Activated naive CD4-positive, alpha-beta T cell treated with anti-CD3 and anti-CD28 coated beads, Interleukin-2, amount 10 ng/mL, durations not matched to agents 7 days and 5 days (primary cell): ENCODE measurements at regions of chr11 and their contacts with region 1.

Region 1: DNA sequence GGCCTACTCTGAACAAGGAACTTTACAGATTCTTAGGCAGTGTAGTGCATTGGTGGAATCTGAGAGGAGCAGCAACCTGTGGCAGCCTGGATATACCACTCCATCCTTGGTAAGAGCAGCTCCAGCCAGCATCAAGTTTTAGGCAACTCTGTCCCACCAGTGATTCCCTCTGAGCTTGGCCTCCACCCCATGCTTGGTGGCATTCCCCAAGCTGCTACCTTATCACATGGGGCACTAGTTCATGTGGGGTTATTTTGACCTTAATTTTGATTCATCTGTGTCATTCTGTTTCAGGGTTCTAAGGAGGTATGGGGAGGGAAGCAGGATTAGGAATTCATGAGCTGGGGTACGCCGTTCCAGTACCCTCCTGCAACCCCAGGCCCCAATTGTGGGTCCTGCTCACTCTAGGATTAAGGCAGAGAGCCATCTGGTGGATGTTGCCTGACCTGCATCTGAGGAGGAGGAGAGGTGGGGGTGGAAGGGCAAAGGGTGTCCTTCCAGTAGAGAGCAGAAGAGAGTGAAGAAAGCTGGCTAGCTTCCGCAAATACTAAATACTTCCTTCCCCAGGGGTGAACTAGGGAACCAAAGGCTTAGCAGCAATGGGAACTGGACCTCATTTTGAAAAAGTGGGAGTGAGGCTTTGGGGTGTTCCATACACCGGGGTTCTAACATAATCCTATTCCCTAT is 10.5 kb downstream of the LRRC51 start:
- DNase-seq: peak; percentile 82
- H3K4me3 Mint-ChIP-seq: no peak overlapping the region
- H3K27ac Mint-ChIP-seq: peak overlapping the region; percentile 38
- H3K4me1 Mint-ChIP-seq: peaks cover 7% of the 10 kb centered on the region
- H3K27me3 Mint-ChIP-seq: no peaks in the 10 kb centered on the region

Region 2: GRCh38 chr11:72015511-72016171 is 75.5 kb before region 1 on chr11:
- CTCF ChIA-PET with region 1: interaction called, 156 read pairs
- DNase-seq: no peak
- H3K4me3 Mint-ChIP-seq: no peak overlapping the region
- H3K27ac Mint-ChIP-seq: peak overlapping the region; percentile 69
- H3K4me1 Mint-ChIP-seq: no peaks in the 10 kb centered on the region
- H3K27me3 Mint-ChIP-seq: no peaks in the 10 kb centered on the region

Region 3: DNA sequence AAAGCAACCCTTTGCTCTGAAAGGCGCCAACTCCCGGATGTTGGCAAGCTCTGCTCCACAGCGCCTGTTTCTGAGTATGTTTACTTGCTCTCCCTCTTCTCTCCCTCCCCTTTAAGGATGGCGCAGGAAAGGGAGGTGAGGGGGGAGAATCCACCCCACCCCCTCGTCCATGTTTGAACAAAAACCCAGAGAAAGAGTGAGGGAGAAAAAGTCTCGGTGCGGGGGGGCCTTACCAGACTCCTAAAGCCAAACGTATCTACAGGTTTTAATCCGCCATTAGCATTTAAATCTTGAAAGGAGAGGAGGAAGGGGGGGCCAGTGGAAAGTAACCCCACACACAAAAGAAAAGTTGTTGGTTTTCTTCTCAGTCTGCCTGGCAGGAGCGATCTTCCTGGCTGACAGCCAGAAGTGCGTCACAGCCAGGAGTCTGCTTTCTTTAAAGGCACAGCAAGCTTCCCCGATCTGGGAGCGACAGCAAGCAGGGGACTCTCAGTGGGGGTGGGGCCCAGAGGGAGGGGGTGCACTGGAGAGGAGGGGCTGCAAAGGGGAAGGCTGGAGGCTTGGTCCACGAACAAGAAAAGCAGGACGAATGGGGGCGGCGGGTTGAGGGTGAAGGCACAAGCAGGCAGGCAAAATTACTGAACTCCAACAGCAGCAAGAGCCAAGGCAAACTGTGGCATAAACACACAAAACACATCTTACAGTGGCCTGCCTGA is 50.3 kb before region 1 on chr11:
- CTCF ChIA-PET with region 1: interaction called, 16 read pairs
- DNase-seq: peak; percentile 84
- H3K4me3 Mint-ChIP-seq: no peak overlapping the region
- H3K27ac Mint-ChIP-seq: no peak overlapping the region
- H3K4me1 Mint-ChIP-seq: peaks cover 22% of the 10 kb centered on the region
- H3K27me3 Mint-ChIP-seq: no peaks in the 10 kb centered on the region

Region 4: DNA sequence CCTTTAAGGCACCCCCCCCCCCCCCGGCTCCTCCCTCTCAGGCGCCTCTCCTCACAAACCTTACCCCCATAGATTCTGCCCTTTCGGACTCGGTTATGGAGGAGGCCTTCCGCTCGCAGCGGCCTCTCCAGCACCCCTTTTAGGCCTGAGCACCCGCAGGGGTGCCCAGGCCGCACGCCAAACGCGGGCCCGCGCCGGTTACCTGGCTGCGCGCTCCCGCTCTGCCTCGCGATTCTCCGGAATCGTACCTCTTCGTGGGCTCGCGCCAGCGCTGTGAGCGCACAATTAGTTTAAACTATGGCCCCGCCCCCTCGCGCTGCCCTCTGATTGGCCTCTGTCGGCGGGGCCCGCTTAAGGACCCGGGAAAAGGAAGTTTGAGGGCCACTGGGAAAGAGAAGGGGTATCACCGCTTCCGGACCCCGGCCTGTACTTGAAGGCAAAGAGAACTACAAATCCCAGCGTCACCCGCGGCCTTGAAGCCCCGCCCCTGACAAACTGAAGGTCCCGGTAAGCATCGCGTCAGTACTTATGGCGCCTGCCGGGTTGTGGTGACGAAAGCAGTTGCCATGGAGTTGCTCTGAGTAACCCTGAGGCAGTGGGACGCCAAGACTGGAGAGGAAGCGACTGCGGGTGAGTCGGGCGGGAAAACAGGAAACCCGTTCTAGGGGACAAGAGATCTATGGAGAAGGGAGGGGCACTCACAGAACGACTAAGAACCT is 10.7 kb before region 1 on chr11 and contains the starts of genes LRRC51 and NUMA1:
- CTCF ChIA-PET with region 1: interaction called, 27 read pairs
- DNase-seq: peak; percentile 100
- H3K4me3 Mint-ChIP-seq: peak within 1 kb of the TSS; percentile 88
- H3K27ac Mint-ChIP-seq: peak within 1 kb of the TSS; percentile 93
- H3K4me1 Mint-ChIP-seq: peaks cover 62% of the 10 kb centered on the region
- H3K27me3 Mint-ChIP-seq: no peaks in the 10 kb centered on the region

Region 5: GRCh38 chr11:72144807-72145560 is 53.8 kb after region 1 on chr11:
- CTCF ChIA-PET with region 1: interaction called, 26 read pairs
- DNase-seq: no peak
- H3K4me3 Mint-ChIP-seq: no peak overlapping the region
- H3K27ac Mint-ChIP-seq: no peak overlapping the region
- H3K4me1 Mint-ChIP-seq: no peaks in the 10 kb centered on the region
- H3K27me3 Mint-ChIP-seq: peaks cover 33% of the 10 kb centered on the region